HEK293T (cell line): ENCODE measurements at regions of chr2 and their contacts with region 1.

Region 1: DNA sequence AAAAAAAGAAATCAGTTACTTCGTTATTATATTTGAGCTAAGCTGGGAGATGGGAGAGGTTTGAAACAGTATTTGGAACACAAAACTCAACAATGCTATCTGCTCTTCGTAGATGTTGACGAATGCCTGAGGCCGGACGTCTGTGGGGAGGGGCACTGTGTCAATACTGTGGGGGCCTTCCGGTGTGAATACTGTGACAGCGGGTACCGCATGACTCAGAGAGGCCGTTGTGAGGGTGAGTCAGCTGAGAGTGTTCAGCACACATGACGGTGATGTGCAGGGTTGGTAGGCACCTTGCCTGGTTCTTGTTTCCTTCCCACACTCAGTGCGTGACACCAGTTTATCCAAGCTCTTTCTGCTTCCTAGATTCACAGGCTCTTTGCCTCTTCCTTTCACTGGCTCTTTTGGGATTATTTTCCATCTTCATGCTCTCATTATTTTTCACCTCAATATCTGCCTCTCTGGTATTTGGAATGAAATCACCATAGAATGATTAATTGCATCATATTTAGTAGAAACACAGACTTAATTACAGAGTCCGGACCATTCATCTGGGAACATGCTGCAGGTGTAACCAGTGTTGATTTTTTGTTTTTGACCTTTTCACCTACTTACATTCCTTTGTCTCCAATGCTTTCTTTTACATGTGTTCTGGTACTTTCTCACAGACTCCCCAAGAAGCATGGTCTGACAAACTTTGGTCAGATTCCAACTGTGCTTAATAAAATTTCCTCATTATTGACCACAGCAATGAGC is 200.6 kb upstream of the RASGRP3 start:
- DNase-seq: no peak

Region 2: GRCh38 chr2:33298233-33298632 is 22.4 kb after region 1 on chr2:
- CTCF ChIA-PET with region 1: no interaction called
- POLR2A ChIA-PET with region 1: no interaction called
- DNase-seq: no peak

Region 3: DNA sequence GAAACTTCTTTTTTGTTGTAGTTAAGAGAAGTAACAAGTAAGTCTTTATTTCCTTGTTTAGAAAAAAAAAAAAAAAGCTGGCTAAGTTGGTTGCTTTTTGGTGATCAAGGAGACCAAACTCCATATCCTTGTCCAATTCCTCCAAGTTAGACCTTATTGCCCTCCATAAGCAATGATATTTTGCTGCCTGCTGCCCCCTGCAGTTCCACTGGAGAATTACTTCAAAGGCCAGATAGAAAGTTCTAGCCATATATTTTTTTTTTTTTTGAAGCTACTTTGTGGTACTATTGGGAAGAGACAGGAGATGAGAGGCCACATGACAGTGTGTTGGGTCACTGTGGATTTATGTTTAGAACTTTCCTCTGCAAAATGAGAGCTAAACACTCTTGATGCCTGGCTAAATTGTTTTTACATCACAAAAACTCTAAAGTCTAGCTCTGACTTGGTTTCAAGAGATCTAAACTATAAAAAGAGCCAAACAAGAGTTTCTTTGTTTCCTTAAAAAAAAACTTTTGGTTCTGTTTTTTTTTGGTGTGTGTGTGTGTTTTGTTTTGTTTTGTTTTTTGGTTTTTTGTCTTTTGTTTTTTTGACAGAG is 119.9 kb after region 1 on chr2:
- CTCF ChIA-PET with region 1: interaction called, 10 read pairs
- POLR2A ChIA-PET with region 1: no interaction called
- DNase-seq: peak; percentile 27